Activated T-helper 1 cell treated with anti-CD3 and anti-CD28 coated beads, Interleukin-12 subunit alpha, Interleukin-12 subunit beta, Interleukin-2, Interleukin-4 antibody, amounts not matched to agents 30 ng/mL and 10 ng/mL and 1 ng/mL, durations not matched to agents 14 hours and 24 hours and 36 hours (primary cell): ENCODE measurements at regions of chr4 and their contacts with region 1.

Region 1: DNA sequence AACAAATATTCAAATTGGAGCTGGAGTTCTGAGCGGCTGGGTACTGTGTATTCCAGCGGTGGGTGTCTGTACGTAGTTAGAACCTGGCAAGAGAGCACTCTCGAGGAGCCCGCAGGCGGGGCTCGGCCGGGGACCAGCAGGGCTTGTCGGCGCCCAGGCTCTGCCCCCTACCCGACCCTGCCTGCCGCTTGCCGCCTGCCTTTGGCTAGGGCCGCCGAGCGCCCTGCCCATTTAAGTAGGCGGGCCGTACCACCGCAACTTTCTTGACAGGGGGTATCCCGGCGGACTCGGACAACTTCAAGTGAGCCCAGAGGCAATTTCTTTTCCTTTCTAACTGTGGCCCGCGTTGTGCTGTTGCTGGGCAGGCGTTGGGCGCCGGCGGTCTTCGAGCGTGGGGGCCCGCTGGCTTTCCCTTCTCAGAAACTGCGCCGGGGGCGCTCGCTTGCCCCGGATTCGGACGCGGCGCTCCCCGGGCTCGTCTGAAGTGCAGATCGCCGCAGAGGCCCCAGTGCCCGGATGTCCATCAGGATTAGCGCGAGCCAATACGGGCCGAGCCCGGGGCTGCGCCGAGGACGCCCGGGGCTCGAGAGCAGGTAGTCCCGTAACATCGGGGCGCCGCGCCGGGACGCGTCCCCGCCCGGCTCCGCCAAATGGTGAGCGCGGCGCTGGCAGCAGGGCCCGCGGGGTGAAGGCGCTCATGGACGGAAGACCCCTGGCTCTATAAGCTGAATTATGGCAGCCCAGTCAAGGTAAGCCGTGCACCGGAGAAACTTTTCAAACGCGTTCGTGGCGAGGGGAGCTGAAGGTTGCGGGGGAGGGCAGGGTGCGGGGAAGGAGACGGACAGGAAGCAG is 72.1 kb downstream of the AFF1 start:
- DNase-seq: peak; percentile 87
- H3K4me3 Mint-ChIP-seq: peak overlapping the region; percentile 98
- H3K27ac Mint-ChIP-seq: peak overlapping the region; percentile 96
- H3K4me1 Mint-ChIP-seq: peaks cover 52% of the 10 kb centered on the region
- H3K27me3 Mint-ChIP-seq: no peaks in the 10 kb centered on the region

Region 2: GRCh38 chr4:86472377-86473019 is 534.4 kb before region 1 on chr4:
- intact Hi-C with region 1: no loop called
- DNase-seq: no peak
- H3K4me3 Mint-ChIP-seq: no peak overlapping the region
- H3K27ac Mint-ChIP-seq: no peak overlapping the region
- H3K4me1 Mint-ChIP-seq: no peaks in the 10 kb centered on the region
- H3K27me3 Mint-ChIP-seq: peaks cover 9% of the 10 kb centered on the region

Region 3: DNA sequence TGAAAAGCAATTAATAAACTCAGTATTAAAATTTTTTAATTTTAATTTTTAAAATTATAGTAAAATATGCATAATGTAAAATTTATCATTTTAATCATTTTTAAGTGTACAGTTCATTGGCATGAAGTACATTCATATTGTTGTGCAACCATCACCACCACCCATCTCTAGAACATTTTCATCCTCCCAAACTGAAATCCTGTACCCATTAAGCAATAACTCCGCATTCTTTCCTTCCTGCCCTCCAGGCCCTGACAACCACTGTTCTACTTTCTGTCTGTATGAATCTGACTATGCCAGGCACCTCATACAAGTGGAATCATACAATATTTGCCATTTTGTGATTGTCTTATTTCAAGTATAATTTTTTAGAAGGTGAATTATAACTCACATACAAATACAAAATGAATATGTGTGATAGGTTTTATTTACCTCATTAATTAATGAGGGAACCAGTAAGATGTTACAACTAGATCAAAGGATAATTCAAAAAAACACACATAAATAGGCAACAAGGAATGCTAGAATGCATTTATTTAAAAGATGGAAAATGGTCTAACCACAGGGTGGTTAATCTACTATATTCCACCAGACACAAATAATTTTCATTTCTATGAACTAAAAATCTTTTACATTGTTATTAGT is 85.2 kb before region 1 on chr4:
- intact Hi-C with region 1: loop called (anchors 1 kb)
- DNase-seq: no peak
- H3K4me3 Mint-ChIP-seq: no peak overlapping the region
- H3K27ac Mint-ChIP-seq: no peak overlapping the region
- H3K4me1 Mint-ChIP-seq: peaks cover 5% of the 10 kb centered on the region
- H3K27me3 Mint-ChIP-seq: no peaks in the 10 kb centered on the region

Region 4: DNA sequence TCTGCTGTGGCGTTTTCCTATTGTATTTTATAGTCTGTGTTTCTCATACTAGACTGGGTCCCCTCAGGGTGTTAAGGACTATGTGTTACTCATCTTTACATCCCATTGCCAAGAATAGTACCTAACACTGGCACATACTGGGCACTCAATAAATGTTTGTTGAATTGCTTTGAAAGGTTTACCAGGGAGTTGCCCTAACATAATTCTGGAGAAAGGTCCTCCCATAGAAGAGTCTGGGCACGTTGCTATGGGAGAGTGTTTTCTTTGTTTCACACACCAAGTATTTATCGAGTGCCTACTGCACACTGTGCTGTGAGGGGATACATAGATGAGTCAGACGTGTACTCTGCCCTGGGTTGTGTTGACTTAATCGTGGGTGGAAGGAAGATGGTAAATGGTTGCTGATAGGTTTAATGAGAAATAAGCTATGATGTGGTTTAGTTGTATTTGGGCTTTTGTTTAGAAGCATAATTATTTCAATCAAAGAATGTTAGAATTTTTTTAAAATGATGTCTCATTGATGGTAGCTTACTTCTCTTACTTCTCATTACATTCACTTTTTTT is 29.2 kb before region 1 on chr4:
- intact Hi-C with region 1: loop called (anchors 1 kb)
- DNase-seq: no peak
- H3K4me3 Mint-ChIP-seq: no peak overlapping the region
- H3K27ac Mint-ChIP-seq: no peak overlapping the region
- H3K4me1 Mint-ChIP-seq: peaks cover 44% of the 10 kb centered on the region
- H3K27me3 Mint-ChIP-seq: no peaks in the 10 kb centered on the region

Region 5: GRCh38 chr4:86993909-86994681 is 12.8 kb before region 1 on chr4:
- intact Hi-C with region 1: no loop called
- DNase-seq: no peak
- H3K4me3 Mint-ChIP-seq: no peak overlapping the region
- H3K27ac Mint-ChIP-seq: no peak overlapping the region
- H3K4me1 Mint-ChIP-seq: peaks cover 5% of the 10 kb centered on the region
- H3K27me3 Mint-ChIP-seq: no peaks in the 10 kb centered on the region

Region 6: DNA sequence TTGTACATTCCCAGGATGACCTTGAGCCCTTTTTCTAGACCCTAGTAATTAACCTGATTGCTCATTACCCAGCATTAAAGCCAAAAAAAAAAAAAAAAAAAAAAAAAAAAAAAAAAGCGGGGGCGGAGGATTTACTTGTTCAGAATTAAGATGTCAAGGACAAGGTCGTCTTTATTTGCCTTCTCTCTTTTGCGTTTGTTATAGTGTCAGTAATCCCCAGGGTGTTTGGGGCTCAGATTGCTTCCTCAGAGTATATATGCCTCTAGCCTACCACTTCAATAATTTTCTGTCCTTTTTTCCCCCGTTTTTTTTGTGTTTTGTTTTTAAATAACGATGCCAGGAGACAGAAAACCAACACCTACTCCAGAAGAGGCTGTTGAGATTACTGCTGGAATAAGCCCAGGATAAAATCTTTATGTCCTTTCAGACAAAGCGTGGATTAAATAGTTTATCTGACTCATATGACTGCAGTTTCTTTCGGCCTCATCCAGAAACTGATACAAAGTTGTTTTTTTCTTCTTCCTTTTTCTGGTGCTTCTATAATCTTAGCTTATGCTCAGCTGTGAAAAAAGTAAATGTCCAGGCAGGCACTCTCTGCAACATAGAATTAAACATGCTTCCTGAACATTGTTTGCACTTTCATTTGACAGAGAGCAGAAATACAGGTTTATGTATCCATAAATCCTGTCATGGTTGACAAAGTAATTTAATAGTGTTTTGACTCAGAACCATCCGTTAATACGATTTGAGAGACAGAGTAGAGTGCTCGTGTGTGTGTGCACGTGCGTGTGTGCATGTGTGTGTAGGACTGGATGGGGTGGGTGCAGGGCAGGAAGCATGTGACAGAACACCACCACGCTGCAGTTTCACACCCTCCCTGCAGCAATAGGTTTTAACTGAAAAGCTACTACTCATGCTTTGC is 66.6 kb after region 1 on chr4:
- intact Hi-C with region 1: loop called (anchors 1 kb)
- DNase-seq: peak; percentile 20
- H3K4me3 Mint-ChIP-seq: peak overlapping the region; percentile 77
- H3K27ac Mint-ChIP-seq: peak overlapping the region; percentile 78
- H3K4me1 Mint-ChIP-seq: peaks cover 37% of the 10 kb centered on the region
- H3K27me3 Mint-ChIP-seq: no peaks in the 10 kb centered on the region

Region 7: GRCh38 chr4:87192145-87192919 is 185.4 kb after region 1 on chr4:
- intact Hi-C with region 1: no loop called
- DNase-seq: no peak
- H3K4me3 Mint-ChIP-seq: no peak overlapping the region
- H3K27ac Mint-ChIP-seq: no peak overlapping the region
- H3K4me1 Mint-ChIP-seq: no peaks in the 10 kb centered on the region
- H3K27me3 Mint-ChIP-seq: no peaks in the 10 kb centered on the region

Region 8: DNA sequence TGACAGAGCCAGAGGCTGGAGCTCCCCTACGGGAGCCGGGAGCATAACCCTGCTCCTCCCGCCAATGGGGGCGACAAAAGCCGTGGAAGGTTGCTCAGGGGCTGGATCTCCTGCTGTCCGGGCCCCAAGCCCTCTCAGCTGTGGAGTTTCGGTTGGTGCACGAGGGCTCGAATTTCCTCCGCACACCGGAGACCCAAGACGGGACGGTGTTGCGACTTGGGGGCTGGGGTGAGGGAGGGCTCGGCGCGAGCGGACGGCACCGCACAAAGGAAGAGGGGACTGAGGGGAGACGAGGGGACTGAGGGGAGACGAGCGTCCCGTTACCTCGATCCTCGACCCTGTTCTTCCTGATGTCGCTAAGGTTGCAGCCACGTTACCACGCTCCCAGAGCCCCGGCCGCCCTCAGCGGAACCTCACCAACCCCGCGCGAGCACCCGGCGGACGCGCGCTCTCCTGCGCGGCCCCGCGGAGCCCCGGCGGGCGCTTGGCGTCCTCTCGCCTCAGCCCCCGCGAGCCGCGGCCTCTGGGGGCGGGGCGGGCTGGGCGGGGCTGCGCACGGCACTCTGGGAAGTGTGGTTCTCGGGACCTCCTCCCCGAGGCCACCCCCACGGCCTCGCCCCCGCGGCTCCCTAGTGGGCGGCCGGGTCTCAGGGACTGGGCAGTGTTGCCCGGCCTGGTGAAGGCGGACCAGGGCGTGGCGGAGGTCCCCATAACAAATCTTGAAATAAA is 213.4 kb after region 1 on chr4 and contains the start of gene KLHL8:
- intact Hi-C with region 1: loop called (anchors 2 kb)
- DNase-seq: peak; percentile 89
- H3K4me3 Mint-ChIP-seq: peak within 1 kb of the TSS; percentile 89
- H3K27ac Mint-ChIP-seq: peak within 1 kb of the TSS; percentile 88
- H3K4me1 Mint-ChIP-seq: peaks cover 18% of the 10 kb centered on the region
- H3K27me3 Mint-ChIP-seq: peaks cover 19% of the 10 kb centered on the region
- total RNA-seq, gene KLHL8: 15.1 and 17.6 TPM in 2 replicates

Region 9: DNA sequence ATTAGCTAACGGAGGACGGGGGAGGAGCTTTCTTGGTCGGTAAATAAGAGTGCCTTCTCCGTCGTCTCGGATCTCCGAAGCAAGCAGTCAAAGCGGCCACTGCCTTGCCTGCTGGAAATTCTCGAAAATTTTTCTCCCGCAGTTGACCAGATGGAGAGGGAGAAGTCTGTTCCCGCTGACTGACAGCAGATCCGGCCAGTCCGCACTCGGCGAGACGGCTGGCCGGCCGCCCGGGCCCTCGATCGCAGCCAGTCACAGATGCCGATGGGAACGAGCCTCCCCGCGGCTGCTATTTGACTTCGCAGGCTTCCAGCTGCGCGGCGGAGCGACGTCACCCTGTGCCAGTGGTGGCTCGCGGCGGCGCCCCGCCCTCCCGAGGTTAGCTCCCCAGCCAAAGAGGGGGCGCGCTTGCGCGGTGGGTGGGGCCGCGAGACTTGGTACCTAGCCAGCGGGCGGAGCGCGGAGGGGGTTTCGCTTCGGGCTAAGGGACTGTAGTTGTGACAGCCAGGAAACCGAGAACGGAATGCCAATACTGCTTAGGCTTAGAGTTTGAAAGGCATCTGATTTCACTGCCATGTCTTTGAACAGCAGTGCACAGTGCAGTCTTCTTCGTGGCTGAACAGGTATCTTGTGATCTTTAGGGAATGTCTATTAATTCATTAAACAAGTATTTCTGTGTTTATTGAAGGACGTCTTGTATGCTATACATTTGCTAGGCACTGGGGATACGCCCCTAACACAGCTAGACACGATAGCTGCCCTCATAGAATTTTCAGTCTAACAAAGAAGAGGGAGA is 1277.7 kb after region 1 on chr4 and contains the start of gene PPM1K:
- intact Hi-C with region 1: loop called (anchors 10 kb)
- DNase-seq: peak; percentile 99
- H3K4me3 Mint-ChIP-seq: peak within 1 kb of the TSS; percentile 99
- H3K27ac Mint-ChIP-seq: peak within 1 kb of the TSS; percentile 99
- H3K4me1 Mint-ChIP-seq: peaks cover 47% of the 10 kb centered on the region
- H3K27me3 Mint-ChIP-seq: no peaks in the 10 kb centered on the region
- total RNA-seq, gene PPM1K: 37.3 and 39.5 TPM in 2 replicates